GM12878 (cell line): ENCODE measurements at regions of chr12 and their contacts with region 1.

Region 1: GRCh38 chr12:96571101-96571862 is 81.9 kb downstream of the CFAP54 start:
- DNase-seq: peak; percentile 93
- ATAC-seq: peak; percentile 87
- H3K4me3 ChIP-seq: peak overlapping the region; percentile 22; the same call in 1 of the 2 replicates
- H3K27ac ChIP-seq: peak overlapping the region; percentile 88
- H3K4me1 ChIP-seq: peaks cover 20% of the 10 kb centered on the region
- H3K27me3 ChIP-seq: no peaks in the 10 kb centered on the region
- CTCF ChIP-seq: no peak
- EP300 ChIP-seq: peak; percentile 74 to 77
- POLR2A ChIP-seq: no peak
- RAD21 ChIP-seq: no peak

Region 2: GRCh38 chr12:96521895-96522682 is 49.2 kb before region 1 on chr12:
- CTCF ChIA-PET with region 1: interaction called, 29 read pairs
- POLR2A ChIA-PET with region 1: interaction called, 10 read pairs
- RAD21 ChIA-PET with region 1: interaction called, 30 read pairs
- SMC1A ChIA-PET with region 1: interaction called, 21 read pairs
- in situ Hi-C with region 1: no loop called
- intact Hi-C with region 1: loop called (anchors 2 kb)
- DNase-seq: no peak
- ATAC-seq: peak; percentile 41; the same call in 2 of the 3 replicates
- H3K4me3 ChIP-seq: no peak overlapping the region
- H3K27ac ChIP-seq: no peak overlapping the region
- H3K4me1 ChIP-seq: peaks cover 5% of the 10 kb centered on the region
- H3K27me3 ChIP-seq: no peaks in the 10 kb centered on the region
- CTCF ChIP-seq: peak in 1 of 3 experiments; percentile 41; a peak in 1 of 6 replicates
- EP300 ChIP-seq: no peak
- POLR2A ChIP-seq: no peak
- RAD21 ChIP-seq: peak; percentile 47; the same call in 1 of the 2 replicates